Posterior vena cava (tissue), 2 donors: ENCODE measurements at regions of chr16 and their contacts with region 1.

Region 1: DNA sequence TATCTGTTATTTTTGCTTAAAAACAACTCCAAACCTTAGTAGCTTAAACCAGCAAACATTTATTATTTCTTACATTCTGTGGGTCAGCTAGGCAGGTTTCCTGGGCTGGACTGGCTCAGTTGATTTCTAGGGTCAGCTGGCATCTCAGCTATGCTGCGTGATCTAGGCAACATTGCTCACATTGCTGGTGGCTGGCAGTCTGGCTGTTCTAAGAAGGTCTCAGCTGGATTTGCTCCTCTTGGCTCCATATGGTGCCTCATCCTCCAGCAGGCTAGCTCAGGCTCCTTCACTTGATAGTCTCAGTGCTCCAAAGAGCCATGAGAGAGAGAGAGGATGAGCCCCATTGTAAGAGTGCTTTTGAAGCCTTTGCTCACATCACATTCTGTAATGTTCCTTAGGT is 470.6 kb upstream of the CDH5 start:
- DNase-seq: no peak

Region 2: DNA sequence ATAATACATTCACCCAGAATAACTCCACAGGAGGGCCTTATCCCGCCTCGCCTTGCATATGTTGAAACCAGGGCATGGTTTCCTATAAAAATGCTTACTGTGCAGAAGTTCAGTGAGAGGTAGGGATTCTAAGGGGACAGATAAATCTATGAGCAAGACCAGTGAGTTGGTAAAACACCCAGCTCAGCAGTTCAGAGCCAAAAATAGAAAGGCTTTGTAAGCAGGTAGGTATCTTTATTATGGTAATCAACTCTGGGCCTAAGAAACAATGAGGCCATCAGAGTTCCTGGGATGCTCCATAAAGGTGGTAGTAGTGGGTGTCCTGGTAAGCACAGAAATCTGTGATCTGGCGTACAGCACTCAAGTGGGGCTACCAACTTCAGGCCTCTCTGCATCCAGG is 78.8 kb before region 1 on chr16:
- intact Hi-C with region 1: no loop called
- DNase-seq: no peak

Region 3: GRCh38 chr16:65867276-65867960 is 28.5 kb before region 1 on chr16:
- intact Hi-C with region 1: loop called in 1 of 2 experiments (anchors 1 kb)
- DNase-seq: no peak